CD4-positive, alpha-beta T cell (primary cell): ENCODE measurements at regions of chr1 and their contacts with region 1.

Region 1: GRCh38 chr1:155934097-155934935 is at the start of gene KHDC4:
- DNase-seq: peak; percentile 88 to 99 (median 93)
- ATAC-seq: peak; percentile 93
- H3K4me3 ChIP-seq: peak within 1 kb of the TSS; percentile 82
- H3K4me3 Mint-ChIP-seq: no peak within 1 kb of the TSS
- H3K27ac ChIP-seq: peak within 1 kb of the TSS; percentile 86 to 95
- H3K27ac Mint-ChIP-seq: no peak within 1 kb of the TSS
- H3K4me1 ChIP-seq: peaks cover 42% of the 10 kb centered on the region
- H3K4me1 Mint-ChIP-seq: peaks cover 38% of the 10 kb centered on the region
- H3K27me3 ChIP-seq: no peaks in the 10 kb centered on the region
- H3K27me3 Mint-ChIP-seq: no peaks in the 10 kb centered on the region
- CTCF ChIP-seq: no peak
- total RNA-seq, gene KHDC4: 56.6 to 60.8 TPM

Region 2: DNA sequence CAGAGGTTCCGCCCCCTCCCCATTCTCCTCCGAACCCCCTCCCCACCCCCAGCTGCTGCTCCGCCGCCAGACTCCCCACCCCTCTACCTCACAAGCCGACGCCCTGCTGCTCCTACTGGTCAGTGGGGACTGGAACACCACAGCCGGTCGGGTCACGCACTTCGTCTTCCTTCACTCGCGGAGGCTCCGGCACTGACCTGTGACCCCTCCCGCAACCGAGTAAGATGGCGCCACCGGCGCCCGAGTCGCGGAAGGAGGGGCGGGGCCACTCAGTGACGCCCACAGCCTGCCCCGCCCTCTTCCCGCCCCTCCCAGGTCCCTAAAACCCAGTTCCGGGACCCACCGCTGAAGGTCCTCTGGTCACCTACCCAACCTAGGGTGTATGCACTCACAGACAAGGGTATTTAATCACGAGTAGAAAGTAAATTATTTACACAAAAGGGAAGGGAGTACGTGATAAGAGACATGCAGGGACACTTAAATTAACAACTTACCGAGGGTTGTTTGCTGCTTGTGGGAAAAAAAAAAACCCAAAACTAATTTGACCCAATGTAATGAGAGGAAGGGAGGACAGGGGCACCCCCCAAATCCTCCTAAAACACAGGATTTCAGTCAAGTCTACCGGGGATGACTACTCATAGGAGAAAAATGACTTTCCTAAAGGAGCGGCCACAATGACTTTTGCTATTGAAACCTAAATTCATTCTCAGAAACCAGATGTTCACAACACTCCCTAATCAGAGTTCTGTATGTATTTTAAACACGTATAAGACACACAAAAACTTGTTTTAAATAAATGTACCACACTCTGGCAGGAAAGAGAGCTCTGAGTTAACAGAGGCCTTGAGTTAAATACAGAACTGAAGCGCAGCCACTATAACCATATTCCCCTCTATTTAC is 22.9 kb before region 1 on chr1 and contains the start of gene RIT1:
- CTCF ChIA-PET with region 1: no interaction called
- POLR2A ChIA-PET with region 1: interaction called, 8 read pairs
- intact Hi-C with region 1: loop called in 1 of 2 experiments (anchors 2 kb)
- DNase-seq: peak; percentile 73 to 93 (median 82)
- ATAC-seq: peak; percentile 98
- H3K4me3 ChIP-seq: peak within 1 kb of the TSS; percentile 67
- H3K4me3 Mint-ChIP-seq: peak within 1 kb of the TSS; percentile 100
- H3K27ac ChIP-seq: peak within 1 kb of the TSS; percentile 57 to 60
- H3K27ac Mint-ChIP-seq: peak within 1 kb of the TSS; percentile 90
- H3K4me1 ChIP-seq: peaks cover 25% of the 10 kb centered on the region
- H3K4me1 Mint-ChIP-seq: peaks cover 28% of the 10 kb centered on the region
- H3K27me3 ChIP-seq: no peaks in the 10 kb centered on the region
- H3K27me3 Mint-ChIP-seq: no peaks in the 10 kb centered on the region
- CTCF ChIP-seq: no peak
- total RNA-seq, gene RIT1: 66.2 to 67.0 TPM

Region 3: GRCh38 chr1:155978325-155978972 is 44.1 kb after region 1 on chr1 and contains the start of gene ARHGEF2:
- CTCF ChIA-PET with region 1: interaction called, 15 read pairs
- POLR2A ChIA-PET with region 1: interaction called, 92 read pairs
- intact Hi-C with region 1: loop called in 1 of 2 experiments (anchors 1 kb)
- DNase-seq: peak; percentile 42 to 86 (median 75)
- ATAC-seq: peak; percentile 59
- H3K4me3 ChIP-seq: peak within 1 kb of the TSS; percentile 93
- H3K4me3 Mint-ChIP-seq: peak within 1 kb of the TSS; percentile 97
- H3K27ac ChIP-seq: peak within 1 kb of the TSS; percentile 66 to 89
- H3K27ac Mint-ChIP-seq: peak within 1 kb of the TSS; percentile 86
- H3K4me1 ChIP-seq: peaks cover 78% of the 10 kb centered on the region
- H3K4me1 Mint-ChIP-seq: peaks cover 75% of the 10 kb centered on the region
- H3K27me3 ChIP-seq: no peaks in the 10 kb centered on the region
- H3K27me3 Mint-ChIP-seq: no peaks in the 10 kb centered on the region
- CTCF ChIP-seq: peak; percentile 21
- total RNA-seq, gene ARHGEF2: 54.8 to 62.4 TPM

Region 4: GRCh38 chr1:156065871-156066270 is 131.6 kb after region 1 on chr1:
- CTCF ChIA-PET with region 1: interaction called, 10 read pairs
- POLR2A ChIA-PET with region 1: no interaction called
- intact Hi-C with region 1: no loop called
- DNase-seq: no peak
- ATAC-seq: no peak
- H3K4me3 ChIP-seq: no peak overlapping the region
- H3K4me3 Mint-ChIP-seq: no peak overlapping the region
- H3K27ac ChIP-seq: no peak overlapping the region
- H3K27ac Mint-ChIP-seq: no peak overlapping the region
- H3K4me1 ChIP-seq: peaks cover 6% of the 10 kb centered on the region
- H3K4me1 Mint-ChIP-seq: peaks cover 6% of the 10 kb centered on the region
- H3K27me3 ChIP-seq: no peaks in the 10 kb centered on the region
- H3K27me3 Mint-ChIP-seq: no peaks in the 10 kb centered on the region
- CTCF ChIP-seq: no peak